PC-9 (cell line): ENCODE measurements at regions of chr9 and their contacts with region 1.

Region 1: DNA sequence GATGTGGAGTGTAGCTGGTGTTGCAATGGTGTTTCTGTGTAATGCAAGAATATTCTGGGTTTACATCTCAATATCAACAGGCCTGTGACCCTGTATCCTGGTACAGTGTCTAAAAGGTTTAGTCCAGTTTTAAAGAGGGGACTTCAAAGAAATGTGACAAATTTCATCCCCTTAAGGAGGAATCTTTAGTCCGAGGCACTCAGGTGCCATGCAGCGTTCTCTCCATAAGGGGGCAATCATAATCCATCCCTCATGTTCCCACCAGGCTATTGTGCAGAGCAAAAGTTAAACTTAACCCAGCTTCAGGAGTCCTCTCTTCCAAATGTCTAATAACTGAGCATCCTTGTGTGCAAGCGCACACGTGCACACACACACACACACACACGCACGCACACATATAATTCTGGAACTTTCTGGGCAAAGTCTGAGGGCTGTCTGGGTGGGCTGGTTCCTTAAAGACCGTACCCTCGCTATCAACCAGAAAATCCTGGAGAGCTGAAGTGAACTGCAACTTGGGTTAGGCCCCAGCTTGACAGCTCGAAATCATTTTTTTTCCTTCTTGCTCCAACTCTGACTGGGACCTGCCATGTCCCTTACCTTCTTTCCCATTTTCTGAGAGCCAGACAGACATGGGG is 46.0 kb downstream of the CRB2 start:
- DNase-seq: peak in 1 of 2 experiments; percentile 45
- H3K4me3 ChIP-seq: no peak overlapping the region
- H3K27ac ChIP-seq: no peak overlapping the region
- H3K4me1 ChIP-seq: no peaks in the 10 kb centered on the region
- H3K27me3 ChIP-seq: no peaks in the 10 kb centered on the region
- CTCF ChIP-seq: peak; percentile 81

Region 2: GRCh38 chr9:122126331-122127261 is 1275.4 kb before region 1 on chr9:
- CTCF ChIA-PET with region 1: no interaction called
- POLR2A ChIA-PET with region 1: no interaction called
- intact Hi-C with region 1: no loop called
- DNase-seq: peak in 1 of 2 experiments; percentile 35
- H3K4me3 ChIP-seq: no peak overlapping the region
- H3K27ac ChIP-seq: no peak overlapping the region
- H3K4me1 ChIP-seq: no peaks in the 10 kb centered on the region
- H3K27me3 ChIP-seq: no peaks in the 10 kb centered on the region
- CTCF ChIP-seq: no peak

Region 3: DNA sequence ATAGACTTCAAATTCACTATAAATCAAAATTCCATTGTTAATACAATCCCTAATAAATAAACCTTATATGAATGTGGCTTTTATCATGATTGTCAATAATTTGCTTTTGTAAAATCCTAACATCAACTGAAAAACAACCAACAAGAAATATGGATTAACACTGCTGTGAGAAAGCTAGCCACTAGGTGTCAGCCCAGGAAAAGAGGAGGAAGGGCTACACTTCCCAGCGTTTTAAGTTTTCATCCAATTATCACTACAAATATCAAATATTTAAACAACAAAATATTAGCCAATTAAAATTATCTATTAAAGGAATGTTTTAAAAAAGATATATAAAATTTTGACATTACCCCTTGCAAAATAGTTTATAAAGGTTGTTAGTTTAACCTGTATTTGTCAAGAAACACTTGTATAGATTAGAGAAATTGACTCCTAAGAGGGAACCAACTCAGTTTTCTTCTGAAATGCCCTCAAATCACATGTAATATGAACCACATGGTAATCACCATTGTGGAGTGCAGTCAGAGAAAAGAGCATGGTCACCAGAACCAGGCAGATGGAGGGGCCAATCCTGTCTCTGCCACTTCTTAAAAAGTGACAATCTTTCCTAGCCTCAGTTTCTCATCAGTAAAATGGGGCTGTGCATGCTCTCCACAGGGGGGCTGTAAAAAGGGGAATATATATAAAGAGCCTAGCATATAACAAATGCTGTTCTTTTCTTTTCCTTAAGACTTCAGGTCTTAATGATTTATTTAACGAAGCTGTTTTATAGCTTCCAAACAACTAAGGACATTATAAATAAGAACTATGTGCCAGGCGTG is 142.2 kb after region 1 on chr9:
- CTCF ChIA-PET with region 1: no interaction called
- POLR2A ChIA-PET with region 1: no interaction called
- intact Hi-C with region 1: loop called (anchors 5 kb)
- DNase-seq: peak in 1 of 2 experiments; percentile 15
- H3K4me3 ChIP-seq: no peak overlapping the region
- H3K27ac ChIP-seq: no peak overlapping the region
- H3K4me1 ChIP-seq: no peaks in the 10 kb centered on the region
- H3K27me3 ChIP-seq: no peaks in the 10 kb centered on the region
- CTCF ChIP-seq: peak; percentile 89